ENCODE measurements at regions of chr1 and their contacts with region 1.

Region 1: GRCh38 chr1:87328272-87329050 is at the start of gene LMO4:
- DNase-seq: peak; percentile 98
- ATAC-seq: peak; percentile 81
- H3K4me3 ChIP-seq: peak within 1 kb of the TSS; percentile 82
- H3K27ac ChIP-seq: peak within 1 kb of the TSS; percentile 100
- H3K4me1 ChIP-seq: peaks cover 4% of the 10 kb centered on the region; the same call in 1 of the 2 replicates
- H3K27me3 ChIP-seq: no peaks in the 10 kb centered on the region
- CTCF ChIP-seq: no peak
- POLR2A ChIP-seq: peak; percentile 93
- RAD21 ChIP-seq: no peak
- total RNA-seq, gene LMO4: 85.8 and 98.9 TPM in 2 replicates

Region 2: GRCh38 chr1:87131809-87132283 is 196.6 kb before region 1 on chr1:
- CTCF ChIA-PET with region 1: interaction called, 3 read pairs
- POLR2A ChIA-PET with region 1: no interaction called
- dilution Hi-C with region 1: no loop called
- in situ Hi-C with region 1: loop called (anchors 10 kb)
- intact Hi-C with region 1: loop called (anchors 2 kb)
- DNase-seq: peak; percentile 64
- ATAC-seq: peak; percentile 96
- H3K4me3 ChIP-seq: peak overlapping the region; percentile 34
- H3K27ac ChIP-seq: peak overlapping the region; percentile 21; the same call in 1 of the 2 replicates
- H3K4me1 ChIP-seq: peaks cover 6% of the 10 kb centered on the region; the same call in 1 of the 2 replicates
- H3K27me3 ChIP-seq: peaks cover 2% of the 10 kb centered on the region; the same call in 1 of the 2 replicates
- CTCF ChIP-seq: peak; percentile 96
- POLR2A ChIP-seq: no peak
- RAD21 ChIP-seq: peak; percentile 97

Region 3: GRCh38 chr1:87243573-87243972 is 84.9 kb before region 1 on chr1:
- CTCF ChIA-PET with region 1: no interaction called
- POLR2A ChIA-PET with region 1: no interaction called
- dilution Hi-C with region 1: no loop called
- in situ Hi-C with region 1: no loop called
- intact Hi-C with region 1: no loop called
- DNase-seq: peak; percentile 89
- ATAC-seq: peak; percentile 97
- H3K4me3 ChIP-seq: no peak overlapping the region
- H3K27ac ChIP-seq: no peak overlapping the region
- H3K4me1 ChIP-seq: peaks cover 2% of the 10 kb centered on the region; the same call in 1 of the 2 replicates
- H3K27me3 ChIP-seq: no peaks in the 10 kb centered on the region
- CTCF ChIP-seq: no peak
- POLR2A ChIP-seq: no peak
- RAD21 ChIP-seq: no peak

Region 4: GRCh38 chr1:87318056-87318650 is 10.3 kb before region 1 on chr1:
- CTCF ChIA-PET with region 1: interaction called, 12 read pairs
- POLR2A ChIA-PET with region 1: no interaction called
- dilution Hi-C with region 1: no loop called
- in situ Hi-C with region 1: no loop called
- intact Hi-C with region 1: no loop called
- DNase-seq: no peak
- ATAC-seq: no peak
- H3K4me3 ChIP-seq: no peak overlapping the region
- H3K27ac ChIP-seq: no peak overlapping the region
- H3K4me1 ChIP-seq: no peaks in the 10 kb centered on the region
- H3K27me3 ChIP-seq: peaks cover 10% of the 10 kb centered on the region
- CTCF ChIP-seq: no peak
- POLR2A ChIP-seq: no peak
- RAD21 ChIP-seq: no peak

Region 5: GRCh38 chr1:87953732-87954344 is 625.4 kb after region 1 on chr1:
- CTCF ChIA-PET with region 1: interaction called, 5 read pairs
- POLR2A ChIA-PET with region 1: no interaction called
- dilution Hi-C with region 1: no loop called
- in situ Hi-C with region 1: loop called (anchors 5 kb)
- intact Hi-C with region 1: loop called (anchors 1 kb)
- DNase-seq: peak; percentile 79
- ATAC-seq: peak; percentile 71
- H3K4me3 ChIP-seq: no peak overlapping the region
- H3K27ac ChIP-seq: no peak overlapping the region
- H3K4me1 ChIP-seq: peaks cover 2% of the 10 kb centered on the region; the same call in 1 of the 2 replicates
- H3K27me3 ChIP-seq: no peaks in the 10 kb centered on the region
- CTCF ChIP-seq: peak; percentile 82
- POLR2A ChIP-seq: no peak
- RAD21 ChIP-seq: peak; percentile 77

Region 6: DNA sequence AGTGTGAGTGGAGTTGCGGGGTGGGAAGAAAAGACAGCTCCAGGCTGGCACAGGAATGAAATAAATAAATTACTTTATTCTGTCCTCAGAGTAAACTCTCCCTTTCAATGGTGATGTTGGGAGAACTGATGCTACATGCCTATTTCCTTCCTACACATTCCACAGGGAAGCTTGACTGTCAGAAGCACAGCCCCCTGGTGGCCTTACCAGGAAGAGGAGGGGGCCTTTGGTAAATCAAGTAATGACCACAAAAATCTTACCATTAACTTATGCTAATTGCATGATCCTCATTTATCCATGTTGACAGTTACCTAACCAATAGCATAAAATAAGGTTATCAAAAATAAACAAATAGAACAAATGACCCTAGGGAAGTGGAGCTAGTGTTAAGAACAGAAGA is 750.6 kb after region 1 on chr1:
- CTCF ChIA-PET with region 1: no interaction called
- POLR2A ChIA-PET with region 1: no interaction called
- dilution Hi-C with region 1: no loop called
- in situ Hi-C with region 1: loop called (anchors 10 kb)
- intact Hi-C with region 1: no loop called
- DNase-seq: peak; percentile 13
- ATAC-seq: no peak
- H3K4me3 ChIP-seq: no peak overlapping the region
- H3K27ac ChIP-seq: no peak overlapping the region
- H3K4me1 ChIP-seq: no peaks in the 10 kb centered on the region
- H3K27me3 ChIP-seq: no peaks in the 10 kb centered on the region
- CTCF ChIP-seq: peak; percentile 38; the same call in 1 of the 2 replicates
- POLR2A ChIP-seq: no peak
- RAD21 ChIP-seq: peak; percentile 45

Region 7: GRCh38 chr1:88302843-88303486 is 974.5 kb after region 1 on chr1:
- CTCF ChIA-PET with region 1: no interaction called
- POLR2A ChIA-PET with region 1: no interaction called
- dilution Hi-C with region 1: no loop called
- in situ Hi-C with region 1: no loop called
- intact Hi-C with region 1: loop called (anchors 10 kb)
- DNase-seq: peak; percentile 55
- ATAC-seq: peak; percentile 82
- H3K4me3 ChIP-seq: no peak overlapping the region
- H3K27ac ChIP-seq: no peak overlapping the region
- H3K4me1 ChIP-seq: no peaks in the 10 kb centered on the region
- H3K27me3 ChIP-seq: no peaks in the 10 kb centered on the region
- CTCF ChIP-seq: peak; percentile 65
- POLR2A ChIP-seq: no peak
- RAD21 ChIP-seq: peak; percentile 72

Measured in IMR-90 (cell line).